Posterior cingulate gyrus (tissue), 11 donors: ENCODE measurements at regions of chr6 and their contacts with region 1.

Region 1: GRCh38 chr6:134394208-134394607 is 76.3 kb upstream of the SGK1 start:
- DNase-seq: no peak

Region 2: GRCh38 chr6:134358320-134358719 is 35.9 kb before region 1 on chr6:
- intact Hi-C with region 1: loop called (anchors 5 kb)
- DNase-seq: no peak